ENCODE measurements at regions of chr7 and their contacts with region 1.

Region 1: GRCh38 chr7:155392726-155393570 is 65.0 kb upstream of the EN2 start:
- DNase-seq: no peak
- H3K4me3 ChIP-seq: no peak overlapping the region
- H3K27ac ChIP-seq: no peak overlapping the region
- H3K4me1 ChIP-seq: no peaks in the 10 kb centered on the region
- H3K27me3 ChIP-seq: no peaks in the 10 kb centered on the region; a peak in 2 of 7 replicates
- CTCF ChIP-seq: no peak
- EP300 ChIP-seq: no peak
- POLR2A ChIP-seq: no peak
- RAD21 ChIP-seq: no peak

Region 2: GRCh38 chr7:155405399-155406318 is 12.7 kb after region 1 on chr7:
- CTCF ChIA-PET with region 1: interaction called, 19 read pairs
- POLR2A ChIA-PET with region 1: no interaction called
- DNase-seq: peak in 1 of 2 experiments; percentile 64
- H3K4me3 ChIP-seq: no peak overlapping the region
- H3K27ac ChIP-seq: no peak overlapping the region
- H3K4me1 ChIP-seq: peaks cover 0 to 11% (median 5%) of the 10 kb centered on the region in 4 experiments; a peak in 6 of 7 replicates
- H3K27me3 ChIP-seq: no peaks in the 10 kb centered on the region
- CTCF ChIP-seq: peak in 2 of 3 experiments; percentile 22 to 33; a peak in 2 of 4 replicates
- EP300 ChIP-seq: no peak
- POLR2A ChIP-seq: no peak
- RAD21 ChIP-seq: peak; percentile 26 to 43; a peak in 3 of 4 replicates